Astrocyte of the cerebellum (primary cell): ENCODE measurements at regions of chr4 and their contacts with region 1.

Region 1: GRCh38 chr4:45596379-45597101 is 527.3 kb downstream of the GABRG1 start:
- DNase-seq: no peak
- H3K4me3 ChIP-seq: no peak overlapping the region
- CTCF ChIP-seq: no peak

Region 2: DNA sequence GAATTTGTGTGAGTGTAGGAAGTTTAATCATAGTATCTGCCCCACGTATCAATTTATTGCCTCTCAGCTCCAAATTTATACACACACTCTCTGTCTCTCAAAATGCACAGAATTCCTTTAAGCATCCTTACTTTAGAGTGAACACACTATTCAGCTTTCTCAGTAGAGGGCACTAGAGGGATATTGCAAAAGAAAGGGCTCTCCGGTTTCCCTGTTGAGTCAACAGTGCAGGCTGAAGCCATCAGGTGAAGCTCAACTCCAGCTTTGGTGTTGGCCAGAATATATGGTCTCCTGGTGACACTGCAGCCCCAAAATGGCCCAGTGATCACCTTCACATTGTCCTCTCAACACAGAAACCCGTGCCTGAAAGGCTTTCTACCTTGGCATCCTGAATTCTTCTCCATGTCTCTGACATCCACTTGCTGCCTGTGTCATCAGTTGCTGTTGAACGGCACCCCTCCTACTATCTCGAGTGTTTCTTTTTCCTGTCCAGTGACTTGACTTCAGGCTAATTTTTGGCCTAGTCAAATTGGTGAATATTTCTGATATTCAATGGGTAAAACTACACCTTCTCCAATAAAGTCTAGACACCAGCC is 143.2 kb before region 1 on chr4:
- in situ Hi-C with region 1: no loop called
- DNase-seq: peak; percentile 29
- H3K4me3 ChIP-seq: no peak overlapping the region
- CTCF ChIP-seq: peak; percentile 75

Region 3: GRCh38 chr4:45518832-45519231 is 77.7 kb before region 1 on chr4:
- in situ Hi-C with region 1: loop called (anchors 5 kb)
- DNase-seq: no peak
- H3K4me3 ChIP-seq: no peak overlapping the region
- CTCF ChIP-seq: no peak